GM12878 (cell line): ENCODE measurements at regions of chr3 and their contacts with region 1.

Region 1: GRCh38 chr3:53845103-53845880 is 927 bp downstream of the CHDH start:
- DNase-seq: no peak
- ATAC-seq: peak; percentile 10
- H3K4me3 ChIP-seq: peak overlapping the region; percentile 73
- H3K27ac ChIP-seq: peak overlapping the region; percentile 62
- H3K4me1 ChIP-seq: peaks cover 39% of the 10 kb centered on the region
- H3K27me3 ChIP-seq: no peaks in the 10 kb centered on the region
- CTCF ChIP-seq: peak; percentile 29 to 33 (median 30); a peak in 2 of 6 replicates
- EP300 ChIP-seq: no peak
- POLR2A ChIP-seq: no peak
- RAD21 ChIP-seq: no peak

Region 2: GRCh38 chr3:53650424-53650823 is 194.9 kb before region 1 on chr3:
- CTCF ChIA-PET with region 1: interaction called, 3 read pairs
- POLR2A ChIA-PET with region 1: interaction called, 4 read pairs
- RAD21 ChIA-PET with region 1: interaction called, 5 read pairs
- SMC1A ChIA-PET with region 1: interaction called, 10 read pairs
- in situ Hi-C with region 1: no loop called
- intact Hi-C with region 1: no loop called
- DNase-seq: peak; percentile 75
- ATAC-seq: peak; percentile 83
- H3K4me3 ChIP-seq: no peak overlapping the region; the same call in 1 of the 2 replicates
- H3K27ac ChIP-seq: no peak overlapping the region
- H3K4me1 ChIP-seq: peaks cover 12% of the 10 kb centered on the region
- H3K27me3 ChIP-seq: no peaks in the 10 kb centered on the region
- CTCF ChIP-seq: no peak
- EP300 ChIP-seq: peak; percentile 50 to 77; a peak in 3 of 4 replicates
- POLR2A ChIP-seq: no peak
- RAD21 ChIP-seq: no peak

Region 3: GRCh38 chr3:53748512-53749271 is 96.6 kb before region 1 on chr3:
- CTCF ChIA-PET with region 1: interaction called, 8 read pairs
- POLR2A ChIA-PET with region 1: interaction called, 19 read pairs
- RAD21 ChIA-PET with region 1: interaction called, 17 read pairs
- SMC1A ChIA-PET with region 1: interaction called, 7 read pairs
- in situ Hi-C with region 1: no loop called
- intact Hi-C with region 1: loop called (anchors 10 kb)
- DNase-seq: peak; percentile 79
- ATAC-seq: peak; percentile 86
- H3K4me3 ChIP-seq: peak overlapping the region; percentile 44; the same call in 1 of the 2 replicates
- H3K27ac ChIP-seq: peak overlapping the region; percentile 92
- H3K4me1 ChIP-seq: peaks cover 55% of the 10 kb centered on the region
- H3K27me3 ChIP-seq: no peaks in the 10 kb centered on the region
- CTCF ChIP-seq: no peak
- EP300 ChIP-seq: peak; percentile 51 to 54; a peak in 2 of 4 replicates
- POLR2A ChIP-seq: no peak
- RAD21 ChIP-seq: no peak

Region 4: GRCh38 chr3:53806182-53807116 is 38.8 kb before region 1 on chr3:
- CTCF ChIA-PET with region 1: no interaction called
- POLR2A ChIA-PET with region 1: interaction called, 5 read pairs
- RAD21 ChIA-PET with region 1: interaction called, 9 read pairs
- SMC1A ChIA-PET with region 1: interaction called, 10 read pairs
- in situ Hi-C with region 1: no loop called
- intact Hi-C with region 1: no loop called
- DNase-seq: peak; percentile 13
- ATAC-seq: peak; percentile 76
- H3K4me3 ChIP-seq: no peak overlapping the region
- H3K27ac ChIP-seq: no peak overlapping the region
- H3K4me1 ChIP-seq: peaks cover 17% of the 10 kb centered on the region
- H3K27me3 ChIP-seq: no peaks in the 10 kb centered on the region
- CTCF ChIP-seq: no peak
- EP300 ChIP-seq: no peak
- POLR2A ChIP-seq: no peak
- RAD21 ChIP-seq: no peak

Region 5: GRCh38 chr3:53881691-53882593 is 36.6 kb after region 1 on chr3 and contains the start of gene ACTR8:
- CTCF ChIA-PET with region 1: interaction called, 6 read pairs
- POLR2A ChIA-PET with region 1: interaction called, 6 read pairs
- RAD21 ChIA-PET with region 1: interaction called, 12 read pairs
- SMC1A ChIA-PET with region 1: interaction called, 11 read pairs
- in situ Hi-C with region 1: no loop called
- intact Hi-C with region 1: loop called (anchors 2 kb)
- DNase-seq: peak; percentile 57
- ATAC-seq: peak; percentile 93
- H3K4me3 ChIP-seq: peak within 1 kb of the TSS; percentile 80
- H3K27ac ChIP-seq: peak within 1 kb of the TSS; percentile 88
- H3K4me1 ChIP-seq: peaks cover 7% of the 10 kb centered on the region
- H3K27me3 ChIP-seq: no peaks in the 10 kb centered on the region
- CTCF ChIP-seq: 0 out of 6 replicates have a peak, but pooled peaks of 1 of the 3 experiments have one; percentile 13
- EP300 ChIP-seq: no peak
- POLR2A ChIP-seq: peak; percentile 99
- RAD21 ChIP-seq: no peak
- polyA plus RNA-seq, gene ACTR8: 5.3 to 15.5 TPM

Region 6: DNA sequence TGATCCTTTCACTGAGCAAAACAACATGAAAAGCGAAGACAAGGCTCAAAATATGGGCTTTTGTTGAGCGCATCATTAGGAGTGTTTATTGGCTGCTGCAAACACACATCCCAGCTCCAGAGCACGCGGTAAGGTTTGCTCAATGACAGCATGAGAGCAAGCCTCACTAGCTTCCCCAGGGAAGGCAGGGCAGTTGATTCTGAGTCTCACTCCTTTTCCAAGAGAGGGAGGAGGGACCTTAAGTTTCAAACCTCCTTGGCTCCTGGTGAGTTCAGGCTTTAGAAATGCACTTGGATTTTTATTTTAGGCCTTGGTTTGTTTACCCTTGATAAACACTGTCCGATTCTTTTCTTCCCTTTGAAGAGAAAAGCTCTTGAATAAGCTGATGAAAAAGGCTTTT is 207.9 kb after region 1 on chr3:
- CTCF ChIA-PET with region 1: no interaction called
- POLR2A ChIA-PET with region 1: no interaction called
- RAD21 ChIA-PET with region 1: no interaction called
- SMC1A ChIA-PET with region 1: no interaction called
- in situ Hi-C with region 1: no loop called
- intact Hi-C with region 1: no loop called
- DNase-seq: no peak
- ATAC-seq: no peak
- H3K4me3 ChIP-seq: no peak overlapping the region
- H3K27ac ChIP-seq: no peak overlapping the region
- H3K4me1 ChIP-seq: no peaks in the 10 kb centered on the region
- H3K27me3 ChIP-seq: no peaks in the 10 kb centered on the region
- CTCF ChIP-seq: no peak
- EP300 ChIP-seq: no peak
- POLR2A ChIP-seq: no peak
- RAD21 ChIP-seq: no peak